A549 (cell line): ENCODE measurements at regions of chr14 and their contacts with region 1.

Region 1: GRCh38 chr14:24207104-24207551 is 1.6 kb downstream of the TSSK4 start:
- DNase-seq: no peak
- ATAC-seq: no peak
- H3K4me3 ChIP-seq: no peak overlapping the region
- H3K27ac ChIP-seq: no peak overlapping the region
- H3K4me1 ChIP-seq: peaks cover 3% of the 10 kb centered on the region; the same call in 1 of the 3 replicates
- CTCF ChIP-seq: no peak
- EP300 ChIP-seq: no peak
- POLR2A ChIP-seq: no peak
- RAD21 ChIP-seq: no peak

Region 2: DNA sequence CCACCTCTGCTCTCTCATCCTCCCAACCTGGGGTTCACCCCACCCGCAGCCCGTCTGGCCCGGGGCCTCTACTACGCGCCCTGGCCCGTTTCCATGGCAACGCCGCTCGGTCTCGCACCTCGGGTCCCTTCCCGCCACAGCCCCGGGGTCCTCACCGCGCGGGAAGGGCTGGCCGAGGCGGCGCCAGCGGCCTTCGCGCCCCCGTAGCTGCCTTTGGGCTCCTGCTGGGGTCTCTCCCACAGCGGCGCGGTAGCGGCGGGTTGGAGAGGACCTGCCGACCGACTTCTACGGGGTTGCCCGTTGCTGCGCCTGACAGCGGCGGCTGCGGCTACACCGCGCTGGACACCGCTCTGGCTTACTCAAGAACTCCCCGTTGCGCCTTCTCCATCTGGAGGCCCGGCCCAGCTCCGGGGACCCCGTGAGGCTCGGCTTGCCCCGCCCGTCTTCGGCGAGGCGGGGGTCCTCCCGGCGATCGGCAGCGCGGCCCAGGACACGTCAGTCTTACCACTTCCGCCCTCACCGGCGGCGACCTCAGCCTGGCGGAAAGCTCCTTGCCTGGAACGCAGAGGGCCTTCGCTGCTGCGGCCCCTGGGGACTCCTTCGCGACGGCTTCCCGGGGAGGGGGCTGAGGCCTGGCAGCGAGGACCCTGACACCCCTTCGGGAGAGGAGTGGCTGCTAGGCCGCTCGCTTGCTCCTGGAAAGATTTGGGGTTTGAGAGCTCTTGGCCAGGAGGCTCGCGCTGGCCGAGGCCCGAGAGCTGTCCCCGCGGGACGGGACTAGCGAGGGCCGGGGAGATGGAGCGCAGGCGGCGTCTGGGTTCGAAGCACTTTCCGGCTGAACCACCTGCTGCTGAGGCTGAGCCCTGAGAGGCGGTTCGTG is 11.7 kb before region 1 on chr14 and contains the start of gene TM9SF1:
- CTCF ChIA-PET with region 1: interaction called, 7 read pairs
- POLR2A ChIA-PET with region 1: interaction called, 16 read pairs
- DNase-seq: peak; percentile 79 to 90
- ATAC-seq: peak; percentile 96
- H3K4me3 ChIP-seq: peak within 1 kb of the TSS; percentile 62
- H3K27ac ChIP-seq: peak within 1 kb of the TSS; percentile 88 to 98
- H3K4me1 ChIP-seq: peaks cover 14% of the 10 kb centered on the region; the same call in 2 of the 3 replicates
- CTCF ChIP-seq: no peak
- EP300 ChIP-seq: no peak
- POLR2A ChIP-seq: peak; percentile 78
- RAD21 ChIP-seq: no peak
- polyA plus RNA-seq, gene TM9SF1: 48.0 and 74.9 TPM in 2 replicates